ENCODE measurements at regions of chr3 and their contacts with region 1.

Region 1: GRCh38 chr3:177102553-177102952 is 94.7 kb downstream of the TBL1XR1 start:
- DNase-seq: no peak
- ATAC-seq: no peak
- H3K4me3 ChIP-seq: no peak overlapping the region
- H3K4me3 Mint-ChIP-seq: peak overlapping the region in 4 of 10 donors; percentile 13 to 59 (median 26)
- H3K27ac ChIP-seq: no peak overlapping the region
- H3K27ac Mint-ChIP-seq: peak overlapping the region in 6 of 9 donors; percentile 0 to 27 (median 12)
- H3K4me1 ChIP-seq: peaks cover 10 to 15% of the 10 kb centered on the region in 2 donors
- H3K4me1 Mint-ChIP-seq: peaks cover 24 to 76% (median 51%) of the 10 kb centered on the region in 7 donors
- H3K27me3 ChIP-seq: no peaks in the 10 kb centered on the region
- H3K27me3 Mint-ChIP-seq: no peaks in the 10 kb centered on the region

Region 2: DNA sequence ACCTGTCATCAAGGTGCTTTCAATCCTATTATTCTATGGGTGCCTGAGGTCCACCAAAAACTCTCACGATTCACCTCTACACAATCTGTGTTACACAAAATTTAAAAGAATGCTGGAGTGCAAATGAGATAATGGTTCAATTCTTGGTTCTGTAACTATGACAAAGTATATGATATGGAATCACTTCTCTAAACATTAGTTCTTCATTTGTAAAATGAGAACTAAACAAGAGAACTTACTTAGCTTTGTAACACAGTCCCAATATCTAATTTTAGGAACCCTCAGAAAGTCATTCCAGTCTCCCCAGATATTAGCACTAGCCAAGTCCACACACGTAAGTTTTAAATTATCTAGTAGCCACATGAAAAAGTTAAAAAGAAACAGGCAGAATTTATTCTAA is 16.8 kb before region 1 on chr3:
- CTCF ChIA-PET with region 1: no interaction called
- POLR2A ChIA-PET with region 1: no interaction called
- intact Hi-C with region 1: loop called in 1 of 2 experiments (anchors 2 kb)
- DNase-seq: no peak
- ATAC-seq: peak; percentile 66
- H3K4me3 ChIP-seq: no peak overlapping the region
- H3K4me3 Mint-ChIP-seq: no peak overlapping the region
- H3K27ac ChIP-seq: no peak overlapping the region
- H3K27ac Mint-ChIP-seq: peak overlapping the region in 1 of 9 donors; percentile 47
- H3K4me1 ChIP-seq: peaks cover 0 to 17% of the 10 kb centered on the region in 2 donors
- H3K4me1 Mint-ChIP-seq: peaks cover 33 to 85% (median 77%) of the 10 kb centered on the region in 7 donors
- H3K27me3 ChIP-seq: no peaks in the 10 kb centered on the region
- H3K27me3 Mint-ChIP-seq: no peaks in the 10 kb centered on the region